ENCODE measurements at regions of chr19 and their contacts with region 1.

Region 1: DNA sequence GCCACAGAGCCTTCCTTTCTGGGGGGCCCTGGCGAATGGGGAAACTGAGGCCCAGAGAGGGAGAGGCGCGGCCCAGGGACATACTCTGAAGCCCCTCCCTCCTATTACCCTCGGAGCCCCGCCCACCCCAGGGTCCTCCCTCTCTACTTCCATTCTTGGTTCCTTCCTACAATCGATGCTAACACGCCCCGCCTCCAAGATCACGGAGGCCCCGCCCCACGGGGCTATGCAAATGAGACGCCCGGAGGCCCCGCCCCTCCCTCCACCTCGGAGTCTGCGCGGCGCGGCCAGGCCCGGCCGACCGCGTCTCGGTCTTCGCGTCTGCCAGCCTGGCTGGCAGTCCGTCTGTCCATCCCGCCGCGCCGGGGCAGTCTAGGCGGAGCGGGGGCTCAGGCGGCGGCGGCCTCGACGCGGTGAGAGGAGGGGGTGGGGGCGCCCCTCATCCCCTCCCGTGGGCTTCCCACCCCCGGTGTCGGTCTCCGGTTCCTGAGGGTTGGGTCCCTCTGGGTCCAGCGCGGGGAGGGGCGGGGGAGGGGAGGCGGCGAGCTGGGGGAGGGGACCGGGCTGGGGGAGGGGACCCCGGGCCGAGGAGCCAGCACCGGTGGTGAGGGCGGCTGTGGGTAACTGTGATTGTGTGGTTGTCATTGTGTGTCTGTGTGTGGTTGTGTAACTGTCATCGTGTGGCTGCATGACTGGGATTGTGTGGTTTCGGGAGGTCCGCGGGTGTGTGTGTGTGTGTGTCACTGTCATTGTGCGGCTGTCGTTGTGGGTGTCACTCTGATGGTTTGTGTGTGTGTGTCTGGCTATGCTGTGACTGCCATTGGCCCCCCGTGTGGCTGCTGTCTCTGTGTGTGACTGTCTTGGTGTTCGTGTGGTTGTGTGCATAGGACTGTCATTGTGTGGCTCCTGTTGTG is at the start of gene PLPPR2:
- DNase-seq: peak; percentile 79
- H3K4me3 Mint-ChIP-seq: peak within 1 kb of the TSS; percentile 67
- H3K27ac Mint-ChIP-seq: no peak within 1 kb of the TSS
- H3K4me1 Mint-ChIP-seq: peaks cover 11% of the 10 kb centered on the region
- H3K27me3 Mint-ChIP-seq: peaks cover 15% of the 10 kb centered on the region
- total RNA-seq, gene PLPPR2: 2.0 TPM in 2 replicates

Region 2: GRCh38 chr19:10424011-10424637 is 931.3 kb before region 1 on chr19:
- intact Hi-C with region 1: no loop called
- DNase-seq: peak; percentile 58
- H3K4me3 Mint-ChIP-seq: peak overlapping the region; percentile 85
- H3K27ac Mint-ChIP-seq: peak overlapping the region; percentile 75
- H3K4me1 Mint-ChIP-seq: peaks cover 73% of the 10 kb centered on the region
- H3K27me3 Mint-ChIP-seq: peaks cover 2% of the 10 kb centered on the region

Region 3: DNA sequence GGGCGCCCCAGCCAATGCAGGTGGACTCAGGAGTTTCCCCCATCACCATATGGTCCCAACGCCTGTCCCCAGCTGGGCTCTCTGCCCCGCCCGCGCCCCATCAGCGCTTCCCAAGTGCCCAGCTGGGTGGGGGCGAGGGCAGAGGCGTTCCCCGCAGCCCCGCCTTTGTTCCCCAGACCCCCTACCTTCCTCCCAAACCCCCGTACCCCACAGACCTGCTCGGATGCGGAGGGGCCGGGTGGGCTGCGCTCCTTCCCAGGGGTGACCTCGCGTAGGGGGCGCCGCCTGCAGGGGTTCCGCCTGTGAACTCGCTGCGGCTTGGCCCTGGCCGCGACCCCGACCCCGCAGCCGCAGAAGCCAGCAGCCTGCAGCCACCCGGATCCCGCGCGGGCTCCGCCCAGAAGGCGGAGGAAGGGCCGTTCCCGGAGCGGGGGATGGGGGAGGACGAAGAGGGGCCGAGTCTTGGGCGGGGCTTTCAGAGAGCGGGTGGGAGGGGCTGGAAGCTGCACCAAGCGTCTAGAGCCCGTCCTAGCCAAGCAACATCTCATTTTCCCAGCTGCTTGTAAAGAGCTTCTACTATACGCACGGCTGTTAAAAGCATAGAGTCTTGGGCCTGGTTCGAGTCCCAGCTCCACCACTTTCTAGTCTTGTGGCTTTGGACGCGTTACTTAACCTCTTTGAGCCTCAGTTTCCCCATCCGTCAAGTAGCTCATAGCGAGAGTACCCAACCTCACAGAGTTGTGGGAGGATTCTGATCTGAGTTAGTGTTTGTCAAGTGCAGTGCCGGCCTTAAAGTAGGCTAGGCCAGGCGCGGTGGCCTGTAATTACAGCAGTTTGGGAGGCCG is 15.9 kb before region 1 on chr19 and contains the start of gene RAB3D:
- intact Hi-C with region 1: loop called (anchors 1 kb)
- DNase-seq: peak; percentile 76
- H3K4me3 Mint-ChIP-seq: peak within 1 kb of the TSS; percentile 78
- H3K27ac Mint-ChIP-seq: no peak within 1 kb of the TSS
- H3K4me1 Mint-ChIP-seq: peaks cover 21% of the 10 kb centered on the region
- H3K27me3 Mint-ChIP-seq: no peaks in the 10 kb centered on the region
- total RNA-seq, gene RAB3D: 5.9 and 6.9 TPM in 2 replicates

Region 4: DNA sequence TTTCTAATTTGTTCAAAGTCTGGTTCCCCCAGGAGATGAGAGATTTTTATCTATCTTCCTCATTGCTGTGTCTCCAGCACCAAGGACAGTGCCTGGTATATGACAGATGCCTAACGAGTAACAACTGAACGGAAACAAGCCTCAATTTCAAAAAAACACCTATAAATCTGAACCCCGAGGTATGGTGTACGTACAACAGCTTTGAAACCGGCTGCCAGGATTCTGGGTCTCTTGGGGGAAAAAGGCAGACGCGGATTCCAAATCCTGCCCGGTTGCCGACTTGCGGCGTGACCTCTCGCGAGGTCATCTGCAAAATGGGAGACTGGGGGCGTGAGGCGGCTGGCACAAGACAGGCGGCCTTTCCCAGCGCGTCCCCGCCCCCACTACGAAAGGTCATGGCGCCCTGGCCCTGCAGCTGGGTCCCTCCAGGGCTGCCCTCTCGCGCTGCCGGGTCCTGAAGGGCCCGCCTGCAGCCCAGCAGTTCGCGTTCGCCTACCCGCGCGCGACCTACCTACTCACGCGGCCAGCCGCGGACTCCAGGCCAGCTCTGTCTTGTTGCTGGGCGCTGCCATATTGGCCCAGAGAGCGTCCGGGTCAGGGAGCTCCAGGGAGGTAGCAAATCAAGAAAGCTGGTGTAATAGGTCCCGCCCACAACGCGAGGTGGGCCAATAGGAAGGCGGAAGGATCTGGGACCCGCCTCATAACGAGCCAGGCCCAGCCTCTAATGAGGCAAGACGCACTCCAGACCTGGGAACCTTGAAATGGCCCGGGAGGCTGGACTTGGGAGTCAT is 173.3 kb after region 1 on chr19 and contains the start of gene ECSIT:
- intact Hi-C with region 1: loop called (anchors 1 kb)
- DNase-seq: peak; percentile 89
- H3K4me3 Mint-ChIP-seq: peak within 1 kb of the TSS; percentile 95
- H3K27ac Mint-ChIP-seq: peak within 1 kb of the TSS; percentile 92
- H3K4me1 Mint-ChIP-seq: peaks cover 28% of the 10 kb centered on the region
- H3K27me3 Mint-ChIP-seq: no peaks in the 10 kb centered on the region
- total RNA-seq, gene ECSIT: 37.3 and 38.8 TPM in 2 replicates

Measured in activated T-helper 1 cell treated with anti-CD3 and anti-CD28 coated beads, Interleukin-12 subunit alpha, Interleukin-12 subunit beta, Interleukin-2, Interleukin-4 antibody, amounts not matched to agents 30 ng/mL and 10 ng/mL and 1 ng/mL, durations not matched to agents 14 hours and 24 hours and 36 hours (primary cell).